Caco-2 (cell line): ENCODE measurements at regions of chr12 and their contacts with region 1.

Region 1: GRCh38 chr12:29226616-29227015 is 77.5 kb downstream of the FAR2 start:
- DNase-seq: no peak
- H3K4me3 ChIP-seq: no peak overlapping the region
- H3K4me3 Mint-ChIP-seq: no peak overlapping the region
- H3K27ac Mint-ChIP-seq: no peak overlapping the region
- H3K4me1 ChIP-seq: peaks cover 31% of the 10 kb centered on the region
- H3K4me1 Mint-ChIP-seq: peaks cover 16% of the 10 kb centered on the region
- H3K27me3 ChIP-seq: no peaks in the 10 kb centered on the region
- H3K27me3 Mint-ChIP-seq: no peaks in the 10 kb centered on the region
- CTCF ChIP-seq: no peak

Region 2: GRCh38 chr12:29241821-29242591 is 15.4 kb after region 1 on chr12:
- CTCF ChIA-PET with region 1: no interaction called
- POLR2A ChIA-PET with region 1: no interaction called
- intact Hi-C with region 1: loop called (anchors 1 kb)
- DNase-seq: peak in 1 of 2 experiments; percentile 37
- H3K4me3 ChIP-seq: no peak overlapping the region
- H3K4me3 Mint-ChIP-seq: no peak overlapping the region
- H3K27ac Mint-ChIP-seq: no peak overlapping the region
- H3K4me1 ChIP-seq: no peaks in the 10 kb centered on the region
- H3K4me1 Mint-ChIP-seq: peaks cover 7% of the 10 kb centered on the region
- H3K27me3 ChIP-seq: no peaks in the 10 kb centered on the region; the same call in 1 of the 2 replicates
- H3K27me3 Mint-ChIP-seq: no peaks in the 10 kb centered on the region
- CTCF ChIP-seq: peak in 1 of 2 experiments; percentile 29

Region 3: DNA sequence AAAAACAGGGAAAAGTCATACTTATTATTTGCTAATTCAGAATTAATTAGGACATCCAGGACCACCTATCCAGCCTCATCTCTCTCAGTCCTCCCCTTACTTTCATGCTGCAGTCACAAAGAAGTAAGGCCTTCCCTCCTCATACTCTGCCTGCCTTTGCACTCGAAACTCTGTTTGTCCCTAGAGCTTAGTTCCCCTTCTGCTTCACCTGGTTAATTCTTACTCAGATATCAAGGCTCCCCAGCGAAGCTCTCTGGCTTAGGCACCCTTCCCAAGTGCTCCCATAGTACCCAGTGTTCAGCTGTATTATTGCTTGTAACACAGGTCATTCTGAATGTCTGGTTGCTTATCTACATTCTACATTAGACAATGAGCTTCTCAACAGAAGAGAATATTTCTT is 73.0 kb after region 1 on chr12:
- CTCF ChIA-PET with region 1: no interaction called
- POLR2A ChIA-PET with region 1: no interaction called
- intact Hi-C with region 1: loop called (anchors 5 kb)
- DNase-seq: no peak
- H3K4me3 ChIP-seq: no peak overlapping the region
- H3K4me3 Mint-ChIP-seq: no peak overlapping the region
- H3K27ac Mint-ChIP-seq: no peak overlapping the region
- H3K4me1 ChIP-seq: peaks cover 19% of the 10 kb centered on the region
- H3K4me1 Mint-ChIP-seq: peaks cover 11% of the 10 kb centered on the region
- H3K27me3 ChIP-seq: no peaks in the 10 kb centered on the region
- H3K27me3 Mint-ChIP-seq: no peaks in the 10 kb centered on the region
- CTCF ChIP-seq: no peak